PC-9 (cell line): ENCODE measurements at regions of chr19 and their contacts with region 1.

Region 1: GRCh38 chr19:42244347-42245220 is 2.2 kb upstream of the GSK3A start:
- DNase-seq: peak; percentile 88 to 91
- H3K4me3 ChIP-seq: peak overlapping the region; percentile 88
- H3K27ac ChIP-seq: peak overlapping the region; percentile 35
- H3K4me1 ChIP-seq: peaks cover 17% of the 10 kb centered on the region
- H3K27me3 ChIP-seq: no peaks in the 10 kb centered on the region
- CTCF ChIP-seq: peak; percentile 66

Region 2: GRCh38 chr19:42132851-42133528 is 111.6 kb before region 1 on chr19:
- CTCF ChIA-PET with region 1: interaction called, 3 read pairs
- POLR2A ChIA-PET with region 1: no interaction called
- intact Hi-C with region 1: loop called (anchors 1 kb)
- DNase-seq: peak in 1 of 2 experiments; percentile 83
- H3K4me3 ChIP-seq: peak overlapping the region; percentile 37; the same call in 1 of the 2 replicates
- H3K27ac ChIP-seq: no peak overlapping the region
- H3K4me1 ChIP-seq: no peaks in the 10 kb centered on the region
- H3K27me3 ChIP-seq: peaks cover 6% of the 10 kb centered on the region; the same call in 1 of the 2 replicates
- CTCF ChIP-seq: peak; percentile 97

Region 3: DNA sequence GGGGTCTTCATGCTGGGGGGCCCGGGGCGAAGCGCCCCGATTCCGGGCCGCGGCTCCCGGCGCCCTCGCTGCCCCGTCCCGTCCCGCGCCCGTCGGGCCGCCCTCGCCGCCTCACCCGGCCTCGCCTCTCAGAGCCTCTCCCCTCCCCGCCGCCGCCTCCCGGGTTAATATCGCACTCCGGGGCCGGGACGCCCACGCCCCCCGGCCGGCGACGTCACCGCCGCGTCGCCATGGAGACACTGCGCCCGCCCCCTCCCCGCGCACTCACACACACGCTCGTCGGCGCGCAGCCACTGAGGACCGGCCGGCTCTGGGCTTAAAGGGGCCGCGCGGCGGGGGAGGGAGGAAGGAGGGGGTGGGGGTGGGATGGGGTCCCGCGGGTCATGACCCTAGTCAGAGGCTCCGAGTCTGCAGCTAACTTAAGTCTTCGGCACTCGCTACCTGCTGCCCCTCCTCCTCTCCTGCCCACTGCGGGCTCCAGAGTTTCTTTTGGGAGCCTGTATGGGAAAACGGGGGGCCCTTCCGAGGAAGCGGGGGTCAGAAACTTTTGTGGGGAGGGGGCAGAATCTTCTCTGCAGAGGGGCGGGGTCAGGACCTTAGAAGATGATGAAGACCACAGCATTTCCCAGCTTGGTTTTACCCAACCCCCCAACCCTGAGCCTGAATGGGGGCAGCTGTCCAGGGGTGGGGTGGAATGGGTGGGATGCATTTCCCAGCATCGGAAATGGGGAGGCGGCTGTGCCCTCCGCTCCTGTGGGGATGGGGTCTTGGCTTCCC is 10.6 kb after region 1 on chr19 and contains the start of gene ERF:
- CTCF ChIA-PET with region 1: no interaction called
- POLR2A ChIA-PET with region 1: interaction called, 20 read pairs
- intact Hi-C with region 1: loop called (anchors 1 kb)
- DNase-seq: peak; percentile 71 to 93
- H3K4me3 ChIP-seq: peak within 1 kb of the TSS; percentile 98
- H3K27ac ChIP-seq: 0 out of 2 replicates have a peak within 1 kb of the TSS, but pooled peaks have one; percentile 13
- H3K4me1 ChIP-seq: peaks cover 13% of the 10 kb centered on the region
- H3K27me3 ChIP-seq: no peaks in the 10 kb centered on the region
- CTCF ChIP-seq: no peak
- total RNA-seq, gene ERF: 57.4 and 79.1 TPM in 2 replicates

Region 4: GRCh38 chr19:42295831-42296525 is 51.4 kb after region 1 on chr19:
- CTCF ChIA-PET with region 1: interaction called, 3 read pairs
- POLR2A ChIA-PET with region 1: interaction called, 7 read pairs
- intact Hi-C with region 1: loop called (anchors 1 kb)
- DNase-seq: peak; percentile 58 to 86
- H3K4me3 ChIP-seq: no peak overlapping the region
- H3K27ac ChIP-seq: no peak overlapping the region
- H3K4me1 ChIP-seq: no peaks in the 10 kb centered on the region
- H3K27me3 ChIP-seq: no peaks in the 10 kb centered on the region
- CTCF ChIP-seq: peak; percentile 95

Region 5: DNA sequence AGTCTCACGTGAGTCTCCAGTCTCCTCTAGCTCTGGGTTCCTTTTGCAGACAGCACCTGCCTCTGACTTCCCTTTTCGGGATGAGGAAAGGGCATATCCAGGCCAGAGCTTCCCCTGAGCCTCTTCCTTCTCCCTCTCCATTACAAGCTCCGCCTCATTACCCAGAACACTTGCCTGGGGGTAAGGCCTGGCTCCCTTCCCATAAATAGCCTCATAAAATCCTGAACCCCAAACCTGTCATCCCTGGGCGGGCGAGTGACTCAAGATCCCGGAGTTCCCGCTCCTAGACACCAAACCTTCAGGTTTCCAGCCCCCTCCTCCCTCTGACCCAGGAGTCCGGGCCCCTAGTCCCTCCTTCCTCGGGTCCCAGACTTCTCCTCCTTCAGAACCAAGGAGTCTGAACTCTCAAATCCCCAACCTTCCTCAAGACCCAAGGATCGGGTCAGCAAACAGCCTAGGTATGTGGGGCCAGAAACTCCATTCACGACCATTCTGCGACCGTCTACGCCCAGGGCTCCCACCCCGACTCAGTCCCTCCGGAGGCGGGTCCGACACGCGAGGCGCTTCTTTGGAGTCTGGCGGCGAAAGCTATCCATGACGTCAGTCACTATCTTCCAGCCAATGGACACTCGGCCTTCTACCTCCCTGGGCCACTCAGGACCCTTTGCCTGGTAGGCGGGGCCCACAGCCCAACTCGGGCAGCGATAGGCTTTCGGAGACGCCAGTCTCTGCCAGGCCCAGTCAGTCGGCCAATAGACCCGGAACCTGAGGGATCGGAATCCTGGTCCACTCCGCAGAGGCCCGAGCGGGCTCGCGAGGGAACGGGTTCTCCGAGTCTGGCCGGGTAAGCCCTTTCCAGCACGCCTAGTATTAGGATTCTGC is 152.0 kb after region 1 on chr19:
- CTCF ChIA-PET with region 1: interaction called, 3 read pairs
- POLR2A ChIA-PET with region 1: no interaction called
- intact Hi-C with region 1: loop called (anchors 2 kb)
- DNase-seq: peak; percentile 99 to 100
- H3K4me3 ChIP-seq: peak overlapping the region; percentile 71
- H3K27ac ChIP-seq: peak overlapping the region; percentile 86
- H3K4me1 ChIP-seq: peaks cover 34% of the 10 kb centered on the region
- H3K27me3 ChIP-seq: no peaks in the 10 kb centered on the region
- CTCF ChIP-seq: no peak